Right cardiac atrium (tissue), 5 donors: ENCODE measurements at regions of chr15 and their contacts with region 1.

Region 1: DNA sequence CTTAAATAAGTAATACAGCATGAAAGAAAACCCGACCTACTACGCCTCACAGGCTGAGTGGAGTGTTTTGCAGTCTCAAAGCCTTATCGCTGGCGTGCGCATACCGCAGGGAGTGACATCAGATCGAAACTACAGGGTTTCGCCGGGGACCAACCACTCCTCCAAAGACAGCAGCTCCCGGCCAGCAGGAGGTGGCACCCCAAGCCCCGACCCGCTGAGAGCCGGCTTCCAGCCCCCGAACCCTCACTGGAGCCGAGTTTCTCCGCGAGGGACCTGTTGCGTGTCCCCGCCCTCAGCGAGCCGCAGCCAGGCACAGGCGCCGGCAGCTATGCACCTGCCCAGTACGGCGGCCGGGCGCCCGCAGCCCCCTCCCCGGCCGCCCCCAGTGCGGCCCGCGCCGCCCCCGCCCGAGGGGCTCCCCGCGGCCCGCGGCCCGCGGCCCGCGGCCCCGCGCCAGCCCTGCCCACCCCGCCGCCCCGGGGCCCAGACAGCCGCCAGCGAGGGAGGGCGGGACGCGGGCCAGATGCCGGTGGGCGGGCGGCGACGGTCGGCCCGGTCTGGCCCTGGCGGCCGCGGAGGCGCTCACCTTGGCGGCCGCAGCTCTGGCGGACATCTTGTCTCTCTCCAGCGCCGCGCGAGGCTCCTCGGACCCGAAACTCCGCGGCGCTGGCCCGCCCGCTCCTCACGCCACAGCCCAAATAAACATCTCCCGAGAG is 694 bp downstream of the TJP1 start:
- DNase-seq: peak; percentile 79 to 87 (median 87)
- ATAC-seq: peak; percentile 69 to 74
- H3K4me3 ChIP-seq: peak overlapping the region; percentile 98
- H3K27ac ChIP-seq: peak overlapping the region; percentile 94
- H3K4me1 ChIP-seq: peaks cover 2% of the 10 kb centered on the region
- H3K27me3 ChIP-seq: no peaks in the 10 kb centered on the region

Region 2: DNA sequence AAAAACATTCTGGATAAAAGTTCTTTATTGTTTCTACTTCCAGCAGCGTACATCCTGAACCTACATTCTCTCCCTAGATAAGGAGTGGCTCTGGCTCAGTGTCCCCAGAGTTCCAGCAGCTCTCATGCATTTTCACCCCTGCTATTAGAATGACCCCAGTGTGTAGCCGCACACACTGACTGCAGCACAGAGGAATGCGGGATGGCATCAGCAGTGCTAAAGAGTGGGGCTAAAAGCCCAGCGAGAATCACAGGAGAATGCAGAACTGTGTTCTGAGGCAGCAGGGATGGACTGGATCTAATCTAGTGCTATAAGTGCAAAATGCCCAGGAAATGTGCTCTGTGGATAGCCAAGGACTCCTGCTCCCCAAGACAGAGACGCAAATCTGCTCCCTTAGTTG is 67.1 kb after region 1 on chr15:
- intact Hi-C with region 1: loop called in 1 of 4 experiments (anchors 10 kb)
- DNase-seq: peak; percentile 23 to 69 (median 64)
- ATAC-seq: peak; percentile 89 to 93
- H3K4me3 ChIP-seq: no peak overlapping the region
- H3K27ac ChIP-seq: peak overlapping the region; percentile 87
- H3K4me1 ChIP-seq: peaks cover 7% of the 10 kb centered on the region
- H3K27me3 ChIP-seq: no peaks in the 10 kb centered on the region